Left cardiac atrium (tissue), 4 donors: ENCODE measurements at regions of chr11 and their contacts with region 1.

Region 1: DNA sequence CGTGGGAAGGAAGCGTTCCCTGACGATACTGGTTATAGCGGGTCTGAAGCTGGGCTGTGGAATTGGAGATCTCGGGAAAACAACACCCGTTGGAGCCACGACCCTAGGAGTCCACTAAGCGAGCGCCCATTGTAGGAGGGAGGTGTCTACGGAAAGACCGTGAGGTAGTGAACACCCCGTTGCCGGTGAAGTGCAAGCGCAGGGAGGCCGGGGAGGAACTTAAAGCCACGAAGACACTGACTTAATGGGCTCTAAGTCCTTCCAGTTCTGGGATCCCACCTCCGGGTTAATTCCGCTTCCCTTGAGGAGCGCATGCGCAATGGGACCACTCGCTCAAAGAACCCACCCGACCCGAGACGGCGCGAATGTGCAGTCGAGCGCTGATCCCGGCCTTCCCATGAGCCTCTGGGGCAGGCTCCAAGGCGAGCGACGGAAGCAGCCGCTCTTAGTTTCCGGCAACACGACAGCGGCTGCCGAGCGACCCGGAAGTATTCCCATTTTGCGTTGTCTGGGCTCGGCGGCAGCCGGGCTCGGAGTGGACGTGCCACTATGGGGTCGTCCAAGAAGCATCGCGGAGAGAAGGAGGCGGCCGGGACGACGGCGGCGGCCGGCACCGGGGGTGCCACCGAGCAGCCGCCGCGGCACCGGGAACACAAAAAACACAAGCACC is at the start of gene SART1:
- DNase-seq: peak; percentile 99
- ATAC-seq: peak; percentile 99
- total RNA-seq, gene SART1: 31.2 to 31.6 TPM

Region 2: DNA sequence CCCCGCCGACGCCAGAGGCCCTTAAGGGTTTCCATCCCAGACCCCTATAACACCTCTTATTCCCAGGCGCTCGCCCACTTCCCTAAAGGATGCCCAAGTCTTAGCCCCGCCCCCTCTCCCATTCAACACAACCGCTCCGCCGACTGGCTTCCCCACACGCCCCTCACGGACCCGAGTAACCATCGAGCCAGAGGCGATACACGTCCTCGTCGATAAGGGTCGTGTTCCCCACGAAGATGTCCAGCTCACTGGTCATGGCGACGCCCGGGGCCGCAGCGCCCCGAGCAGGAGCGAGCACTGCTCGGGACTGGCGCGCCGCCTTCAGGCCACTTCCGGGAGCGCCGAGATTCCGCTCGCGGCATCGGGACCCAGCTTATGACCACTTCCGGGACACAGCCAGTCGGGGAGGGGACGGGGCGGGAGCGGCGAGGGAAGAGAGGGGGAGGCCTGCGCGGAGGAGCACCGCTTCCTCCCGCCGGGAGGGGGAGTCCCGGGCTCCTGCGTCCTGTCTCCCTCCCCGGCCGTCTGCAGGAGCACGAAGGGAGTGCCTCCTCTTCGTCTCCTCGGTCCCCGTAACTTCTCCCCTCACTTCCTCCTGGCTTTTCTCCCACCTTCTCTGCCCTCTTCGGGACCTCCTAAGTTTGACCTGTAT is 73.1 kb before region 1 on chr11 and contains the start of gene FIBP:
- intact Hi-C with region 1: loop called (anchors 1 to 10 kb)
- DNase-seq: peak; percentile 97
- ATAC-seq: peak; percentile 82 to 84
- total RNA-seq, gene FIBP: 37.8 to 44.3 TPM